CD4-positive, alpha-beta memory T cell (primary cell): ENCODE measurements at regions of chr16 and their contacts with region 1.

Region 1: GRCh38 chr16:46973207-46973995 is at the start of gene DNAJA2:
- DNase-seq: peak; percentile 87 to 92 (median 91)
- H3K4me3 ChIP-seq: peak within 1 kb of the TSS; percentile 85 to 95
- H3K4me3 Mint-ChIP-seq: peak within 1 kb of the TSS; percentile 92 to 98 (median 95)
- H3K27ac ChIP-seq: peak within 1 kb of the TSS; percentile 91
- H3K27ac Mint-ChIP-seq: peak within 1 kb of the TSS; percentile 95 to 100 (median 99)
- H3K4me1 ChIP-seq: peaks cover 64% of the 10 kb centered on the region
- H3K4me1 Mint-ChIP-seq: peaks cover 35 to 74% (median 54%) of the 10 kb centered on the region in 4 donors
- H3K27me3 ChIP-seq: no peaks in the 10 kb centered on the region
- H3K27me3 Mint-ChIP-seq: no peaks in the 10 kb centered on the region
- total RNA-seq, gene DNAJA2: 73.2 to 79.5 TPM

Region 2: GRCh38 chr16:46830902-46831647 is 142.3 kb before region 1 on chr16 and contains the start of gene C16orf87:
- CTCF ChIA-PET with region 1: no interaction called
- POLR2A ChIA-PET with region 1: interaction called, 18 read pairs
- intact Hi-C with region 1: loop called (anchors 1 kb)
- DNase-seq: peak; percentile 92 to 95 (median 93)
- H3K4me3 ChIP-seq: peak within 1 kb of the TSS; percentile 74 to 84
- H3K4me3 Mint-ChIP-seq: peak within 1 kb of the TSS; percentile 92 to 100 (median 94)
- H3K27ac ChIP-seq: peak within 1 kb of the TSS; percentile 71
- H3K27ac Mint-ChIP-seq: peak within 1 kb of the TSS; percentile 89 to 99 (median 97)
- H3K4me1 ChIP-seq: peaks cover 41% of the 10 kb centered on the region
- H3K4me1 Mint-ChIP-seq: peaks cover 18 to 37% (median 25%) of the 10 kb centered on the region in 4 donors
- H3K27me3 ChIP-seq: no peaks in the 10 kb centered on the region
- H3K27me3 Mint-ChIP-seq: no peaks in the 10 kb centered on the region
- total RNA-seq, gene C16orf87: 5.8 to 6.2 TPM

Region 3: DNA sequence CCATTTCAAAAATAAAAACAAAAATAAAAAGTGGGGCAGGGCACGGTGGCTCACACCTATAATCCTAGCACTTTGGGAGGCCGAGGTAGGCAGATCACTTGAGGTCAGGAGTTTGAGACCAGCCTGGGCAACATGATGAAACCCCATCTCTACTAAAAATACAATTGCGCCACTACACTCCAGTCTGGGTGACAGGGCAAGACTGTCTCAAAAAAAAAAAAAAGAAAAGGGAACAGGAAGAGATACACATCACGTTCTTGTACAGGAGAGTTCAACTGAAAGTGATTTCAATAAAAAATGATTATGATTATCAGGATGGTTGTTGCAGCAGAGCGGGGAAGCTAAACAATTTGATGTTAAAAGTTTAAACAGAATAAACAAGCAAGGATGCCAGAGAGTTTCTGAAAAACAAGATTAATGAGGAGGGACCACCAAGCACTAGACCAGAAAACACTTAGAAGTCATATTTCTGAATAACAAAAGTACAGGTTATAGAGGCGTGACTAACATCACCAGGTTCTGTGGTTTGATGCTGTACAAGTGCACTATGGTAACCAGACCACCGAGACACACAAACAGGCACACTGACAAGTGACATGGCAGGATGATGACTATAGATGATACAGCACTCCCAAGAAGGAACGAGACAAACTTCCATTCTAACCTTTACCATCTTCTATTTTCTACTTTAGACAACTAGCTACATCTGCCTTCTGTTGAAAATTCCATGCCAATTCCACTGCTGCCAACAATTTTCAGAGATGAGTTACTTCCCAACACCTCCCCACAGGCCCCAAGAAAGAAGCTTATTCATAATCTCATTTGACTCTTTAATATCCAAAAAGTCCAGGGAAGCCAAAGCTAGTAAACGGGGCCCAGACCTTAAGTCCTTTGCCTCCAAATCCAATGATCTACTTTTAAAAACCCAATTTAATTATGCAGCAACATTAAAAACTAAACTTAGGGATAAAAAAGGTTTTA is 11.7 kb before region 1 on chr16:
- CTCF ChIA-PET with region 1: interaction called, 4 read pairs
- POLR2A ChIA-PET with region 1: interaction called, 16 read pairs
- intact Hi-C with region 1: no loop called
- DNase-seq: peak in 3 of 5 donors; percentile 31 to 63 (median 38)
- H3K4me3 ChIP-seq: no peak overlapping the region
- H3K4me3 Mint-ChIP-seq: peak overlapping the region in 5 of 8 donors; percentile 2 to 55 (median 24)
- H3K27ac ChIP-seq: no peak overlapping the region
- H3K27ac Mint-ChIP-seq: peak overlapping the region; percentile 33 to 92 (median 84)
- H3K4me1 ChIP-seq: peaks cover 21% of the 10 kb centered on the region
- H3K4me1 Mint-ChIP-seq: peaks cover 20 to 36% (median 31%) of the 10 kb centered on the region in 4 donors
- H3K27me3 ChIP-seq: no peaks in the 10 kb centered on the region
- H3K27me3 Mint-ChIP-seq: no peaks in the 10 kb centered on the region

Region 4: GRCh38 chr16:47162670-47163420 is 189.4 kb after region 1 on chr16:
- CTCF ChIA-PET with region 1: no interaction called
- POLR2A ChIA-PET with region 1: no interaction called
- intact Hi-C with region 1: no loop called
- DNase-seq: no peak
- H3K4me3 ChIP-seq: no peak overlapping the region
- H3K4me3 Mint-ChIP-seq: no peak overlapping the region
- H3K27ac ChIP-seq: no peak overlapping the region
- H3K27ac Mint-ChIP-seq: no peak overlapping the region
- H3K4me1 ChIP-seq: no peaks in the 10 kb centered on the region
- H3K4me1 Mint-ChIP-seq: no peaks in the 10 kb centered on the region
- H3K27me3 ChIP-seq: no peaks in the 10 kb centered on the region
- H3K27me3 Mint-ChIP-seq: no peaks in the 10 kb centered on the region

Region 5: GRCh38 chr16:47460711-47461597 is 487.6 kb after region 1 on chr16 and contains the starts of genes ITFG1 and PHKB:
- CTCF ChIA-PET with region 1: no interaction called
- POLR2A ChIA-PET with region 1: interaction called, 23 read pairs
- intact Hi-C with region 1: loop called (anchors 1 kb)
- DNase-seq: peak; percentile 95 to 98 (median 97)
- H3K4me3 ChIP-seq: peak within 1 kb of the TSS; percentile 74 to 92
- H3K4me3 Mint-ChIP-seq: peak within 1 kb of the TSS; percentile 92 to 99 (median 96)
- H3K27ac ChIP-seq: peak within 1 kb of the TSS; percentile 82
- H3K27ac Mint-ChIP-seq: peak within 1 kb of the TSS; percentile 87 to 99 (median 97)
- H3K4me1 ChIP-seq: peaks cover 56% of the 10 kb centered on the region
- H3K4me1 Mint-ChIP-seq: peaks cover 35 to 72% (median 60%) of the 10 kb centered on the region in 4 donors
- H3K27me3 ChIP-seq: no peaks in the 10 kb centered on the region
- H3K27me3 Mint-ChIP-seq: no peaks in the 10 kb centered on the region
- total RNA-seq, gene ITFG1: 26.1 to 27.7 TPM
- total RNA-seq, gene PHKB: 50.8 to 56.4 TPM

Region 6: GRCh38 chr16:47644661-47645060 is 671.3 kb after region 1 on chr16:
- CTCF ChIA-PET with region 1: no interaction called
- POLR2A ChIA-PET with region 1: no interaction called
- intact Hi-C with region 1: no loop called
- DNase-seq: no peak
- H3K4me3 ChIP-seq: no peak overlapping the region
- H3K4me3 Mint-ChIP-seq: no peak overlapping the region
- H3K27ac ChIP-seq: no peak overlapping the region
- H3K27ac Mint-ChIP-seq: no peak overlapping the region
- H3K4me1 ChIP-seq: no peaks in the 10 kb centered on the region
- H3K4me1 Mint-ChIP-seq: peaks cover 3 to 14% (median 7%) of the 10 kb centered on the region in 4 donors
- H3K27me3 ChIP-seq: no peaks in the 10 kb centered on the region
- H3K27me3 Mint-ChIP-seq: no peaks in the 10 kb centered on the region